ENCODE measurements at regions of chr12 and their contacts with region 1.

Region 1: GRCh38 chr12:6493497-6494257 is at the start of gene NCAPD2:
- DNase-seq: peak; percentile 98
- ATAC-seq: peak; percentile 89
- H3K4me3 Mint-ChIP-seq: peak within 1 kb of the TSS; percentile 94
- H3K27ac Mint-ChIP-seq: peak within 1 kb of the TSS; percentile 98
- H3K4me1 Mint-ChIP-seq: peaks cover 35% of the 10 kb centered on the region
- H3K27me3 Mint-ChIP-seq: no peaks in the 10 kb centered on the region
- total RNA-seq, gene NCAPD2: 199 to 210 TPM

Region 2: GRCh38 chr12:6423267-6424007 is 70.2 kb before region 1 on chr12:
- CTCF ChIA-PET with region 1: interaction called, 16 read pairs
- POLR2A ChIA-PET with region 1: interaction called, 3 read pairs
- intact Hi-C with region 1: loop called (anchors 1 kb)
- DNase-seq: peak; percentile 86
- ATAC-seq: peak; percentile 62
- H3K4me3 Mint-ChIP-seq: peak overlapping the region; percentile 39
- H3K27ac Mint-ChIP-seq: peak overlapping the region; percentile 87
- H3K4me1 Mint-ChIP-seq: peaks cover 47% of the 10 kb centered on the region
- H3K27me3 Mint-ChIP-seq: no peaks in the 10 kb centered on the region

Region 3: GRCh38 chr12:6451348-6452244 is 42.1 kb before region 1 on chr12 and contains the start of gene TAPBPL:
- CTCF ChIA-PET with region 1: no interaction called
- POLR2A ChIA-PET with region 1: no interaction called
- intact Hi-C with region 1: loop called (anchors 1 to 5 kb)
- DNase-seq: peak; percentile 91
- ATAC-seq: peak; percentile 84
- H3K4me3 Mint-ChIP-seq: peak within 1 kb of the TSS; percentile 100
- H3K27ac Mint-ChIP-seq: peak within 1 kb of the TSS; percentile 99
- H3K4me1 Mint-ChIP-seq: peaks cover 67% of the 10 kb centered on the region
- H3K27me3 Mint-ChIP-seq: no peaks in the 10 kb centered on the region
- total RNA-seq, gene TAPBPL: 27.4 to 40.8 TPM

Region 4: DNA sequence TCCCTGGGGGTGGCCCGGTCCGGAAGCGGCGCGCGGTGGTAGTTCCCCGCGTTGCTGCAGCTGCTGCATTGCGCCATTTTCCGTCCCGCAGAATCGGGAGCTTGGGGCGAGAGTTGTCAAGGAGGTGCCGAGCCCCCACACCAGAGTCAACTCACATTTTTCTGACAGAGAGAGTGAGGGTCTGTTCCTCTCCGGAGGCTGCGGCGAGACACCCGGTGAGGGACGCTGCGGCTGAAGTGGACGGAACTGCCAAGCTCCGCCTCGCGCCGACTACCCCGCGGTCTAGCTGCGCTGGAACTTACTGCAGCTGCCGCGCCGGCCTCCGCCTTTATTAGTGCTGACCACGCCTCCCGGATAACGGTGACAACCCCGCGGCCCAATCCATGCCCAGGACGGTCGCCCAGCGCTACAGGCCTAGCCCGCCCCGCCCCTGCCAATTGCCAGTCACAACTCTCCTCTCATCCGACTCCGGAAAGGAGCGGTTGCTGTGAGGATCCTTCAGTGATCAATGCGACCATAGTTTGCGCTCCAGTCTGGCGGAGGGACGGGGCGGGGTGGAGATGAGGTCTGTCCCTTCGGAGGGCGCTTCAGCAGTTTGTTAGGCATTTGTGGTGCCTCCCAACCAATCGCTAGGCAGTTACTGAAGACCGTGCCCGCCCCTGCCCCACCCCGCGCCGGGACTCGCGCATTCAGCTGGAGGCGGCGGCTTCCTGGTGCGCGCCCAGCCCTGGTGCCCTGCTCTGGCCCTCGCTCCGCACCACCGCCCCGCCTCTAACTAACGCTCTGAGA is 23.1 kb before region 1 on chr12 and contains the start of gene VAMP1:
- CTCF ChIA-PET with region 1: interaction called, 15 read pairs
- POLR2A ChIA-PET with region 1: interaction called, 14 read pairs
- intact Hi-C with region 1: loop called (anchors 1 kb)
- DNase-seq: peak; percentile 99
- ATAC-seq: peak; percentile 91
- H3K4me3 Mint-ChIP-seq: peak within 1 kb of the TSS; percentile 91
- H3K27ac Mint-ChIP-seq: peak within 1 kb of the TSS; percentile 82
- H3K4me1 Mint-ChIP-seq: peaks cover 52% of the 10 kb centered on the region
- H3K27me3 Mint-ChIP-seq: no peaks in the 10 kb centered on the region
- total RNA-seq, gene VAMP1: 34.5 to 52.3 TPM

Region 5: DNA sequence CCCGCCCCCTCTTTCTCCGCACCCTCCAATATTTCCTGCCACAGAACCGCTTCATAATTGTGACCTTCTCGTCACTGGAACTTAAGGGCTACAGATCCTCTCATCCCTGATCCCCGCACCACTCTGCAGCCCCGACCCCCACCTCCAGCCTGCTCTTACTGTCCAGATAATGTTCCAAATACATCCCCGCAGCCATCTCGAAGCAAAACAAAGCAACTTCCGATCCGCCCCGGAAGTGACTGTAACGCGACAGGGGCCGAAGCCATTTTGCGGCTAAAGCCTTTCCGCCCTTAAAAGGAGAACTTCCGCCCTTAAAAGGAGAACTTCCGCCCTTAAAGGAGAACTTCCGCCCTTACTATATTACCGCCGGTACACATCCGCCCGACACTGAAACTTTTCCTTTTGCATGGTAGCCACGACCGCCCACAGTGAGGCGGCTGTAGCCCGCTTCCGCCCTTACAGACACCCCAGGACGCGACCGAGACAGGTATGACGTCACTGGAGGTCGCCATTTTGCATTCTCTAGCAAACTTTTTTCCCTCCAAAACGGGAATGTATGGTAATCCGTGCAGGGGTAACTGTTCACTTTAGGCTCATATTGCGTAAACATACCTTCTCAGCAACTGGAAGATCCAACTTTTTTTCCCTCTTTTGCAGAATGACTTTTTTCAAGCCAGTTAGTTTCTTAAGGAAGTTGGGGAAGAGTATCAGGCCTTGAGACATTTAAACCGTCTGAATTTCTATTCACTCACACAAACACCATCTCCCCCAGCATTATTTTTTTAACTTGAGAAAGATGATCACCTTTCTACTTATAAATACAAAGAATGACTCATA is 169.4 kb after region 1 on chr12 and contains the start of gene ING4:
- CTCF ChIA-PET with region 1: no interaction called
- POLR2A ChIA-PET with region 1: no interaction called
- intact Hi-C with region 1: loop called in 1 of 2 experiments (anchors 1 kb)
- DNase-seq: peak; percentile 98
- ATAC-seq: peak; percentile 98
- H3K4me3 Mint-ChIP-seq: peak within 1 kb of the TSS; percentile 84
- H3K27ac Mint-ChIP-seq: peak within 1 kb of the TSS; percentile 91
- H3K4me1 Mint-ChIP-seq: peaks cover 24% of the 10 kb centered on the region
- H3K27me3 Mint-ChIP-seq: no peaks in the 10 kb centered on the region
- total RNA-seq, gene ING4: 14.9 to 17.6 TPM